Ovary (tissue), 10 donors: ENCODE measurements at regions of chr16 and their contacts with region 1.

Region 1: GRCh38 chr16:81650982-81651562 is 128.0 kb upstream of the PLCG2 start:
- DNase-seq: peak; percentile 91 to 94 (median 92)
- H3K4me3 ChIP-seq: no peak overlapping the region
- H3K27ac ChIP-seq: peak overlapping the region; percentile 70 to 83
- H3K4me1 ChIP-seq: peaks cover 27% of the 10 kb centered on the region
- H3K27me3 ChIP-seq: no peaks in the 10 kb centered on the region
- CTCF ChIP-seq: peak in 1 of 3 donors; percentile 5
- EP300 ChIP-seq: no peak
- POLR2A ChIP-seq: peak; percentile 88

Region 2: DNA sequence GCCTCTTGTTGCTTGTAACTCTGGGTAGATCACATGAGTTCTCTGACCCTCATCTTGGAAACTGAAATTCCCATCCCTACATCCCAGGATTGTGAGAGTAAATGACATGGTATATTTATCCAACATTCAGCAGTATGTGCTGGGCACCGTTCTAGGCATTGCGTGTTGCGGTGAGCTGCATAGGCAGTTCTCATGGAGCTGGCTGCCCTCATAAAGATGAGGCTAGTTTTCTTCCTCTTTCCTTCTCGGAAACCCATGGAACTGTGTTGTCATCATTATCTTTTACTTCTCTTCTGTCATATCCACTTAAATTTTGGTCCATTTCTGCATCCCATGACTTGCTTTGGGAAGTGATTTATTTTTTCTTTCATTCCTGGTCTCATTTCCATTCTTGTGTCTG is 189.3 kb before region 1 on chr16:
- intact Hi-C with region 1: loop called in 1 of 4 experiments (anchors 5 kb)
- DNase-seq: no peak
- H3K4me3 ChIP-seq: no peak overlapping the region
- H3K27ac ChIP-seq: no peak overlapping the region
- H3K4me1 ChIP-seq: peaks cover 12% of the 10 kb centered on the region
- H3K27me3 ChIP-seq: no peaks in the 10 kb centered on the region
- CTCF ChIP-seq: no peak
- EP300 ChIP-seq: no peak
- POLR2A ChIP-seq: no peak

Region 3: GRCh38 chr16:81703177-81704155 is 52.4 kb after region 1 on chr16:
- intact Hi-C with region 1: loop called in 1 of 4 experiments (anchors 10 kb)
- DNase-seq: peak; percentile 72 to 87 (median 83)
- H3K4me3 ChIP-seq: no peak overlapping the region
- H3K27ac ChIP-seq: no peak overlapping the region
- H3K4me1 ChIP-seq: peaks cover 8% of the 10 kb centered on the region
- H3K27me3 ChIP-seq: no peaks in the 10 kb centered on the region
- CTCF ChIP-seq: no peak
- EP300 ChIP-seq: no peak
- POLR2A ChIP-seq: no peak

Region 4: DNA sequence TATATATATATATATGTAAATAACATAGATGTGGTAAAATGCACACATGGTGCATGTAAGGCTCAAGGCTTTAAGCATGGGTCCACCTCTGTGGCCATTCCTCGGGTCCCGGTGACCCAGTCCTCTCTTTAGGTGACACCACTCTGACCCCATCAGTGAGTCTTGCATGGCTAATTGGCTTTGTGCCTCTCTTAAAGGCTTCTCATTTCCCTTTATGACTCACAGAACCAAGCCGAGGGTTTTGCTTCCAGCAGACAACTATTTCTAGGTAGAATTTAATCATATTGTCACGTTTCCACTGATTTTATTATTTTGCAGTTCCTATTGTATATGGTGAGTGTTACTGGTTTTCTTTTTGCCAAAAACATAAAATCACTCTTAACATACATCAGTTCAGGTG is 187.7 kb after region 1 on chr16:
- intact Hi-C with region 1: no loop called
- DNase-seq: no peak
- H3K4me3 ChIP-seq: no peak overlapping the region
- H3K27ac ChIP-seq: no peak overlapping the region
- H3K4me1 ChIP-seq: no peaks in the 10 kb centered on the region
- H3K27me3 ChIP-seq: no peaks in the 10 kb centered on the region
- CTCF ChIP-seq: no peak
- EP300 ChIP-seq: no peak
- POLR2A ChIP-seq: no peak

Region 5: DNA sequence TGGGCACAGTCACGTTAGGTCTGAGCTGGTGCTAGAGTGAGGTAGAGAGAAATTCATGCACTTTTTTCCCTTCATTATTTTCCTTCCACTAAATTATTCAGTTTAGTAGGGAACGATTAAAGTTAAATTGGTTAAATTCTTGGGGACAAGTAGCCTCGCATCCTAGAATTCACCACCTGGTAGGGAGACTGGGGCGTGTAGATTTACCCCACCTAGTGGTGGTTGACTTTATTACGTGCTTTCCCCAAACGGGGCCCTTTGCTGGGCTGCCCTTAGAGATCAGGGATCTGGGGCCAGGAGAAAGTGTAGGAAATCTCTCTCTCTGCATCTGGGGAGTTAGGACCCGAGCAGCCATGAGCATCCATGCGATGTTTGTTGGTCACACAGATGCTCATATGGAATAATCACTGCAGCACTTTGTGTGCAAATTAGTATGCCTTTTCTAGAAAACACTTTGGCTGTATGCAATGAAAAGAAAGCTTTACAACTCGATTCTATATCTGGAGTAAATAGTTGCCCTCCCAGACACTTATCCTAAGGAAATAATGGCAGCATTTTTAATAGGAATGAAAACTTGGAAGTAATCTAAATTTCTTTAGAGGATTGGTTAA is 235.0 kb after region 1 on chr16:
- intact Hi-C with region 1: no loop called
- DNase-seq: no peak
- H3K4me3 ChIP-seq: no peak overlapping the region
- H3K27ac ChIP-seq: no peak overlapping the region
- H3K4me1 ChIP-seq: no peaks in the 10 kb centered on the region
- H3K27me3 ChIP-seq: no peaks in the 10 kb centered on the region
- CTCF ChIP-seq: no peak
- EP300 ChIP-seq: no peak
- POLR2A ChIP-seq: no peak